HepG2 (cell line): ENCODE measurements at regions of chr4 and their contacts with region 1.

Region 1: DNA sequence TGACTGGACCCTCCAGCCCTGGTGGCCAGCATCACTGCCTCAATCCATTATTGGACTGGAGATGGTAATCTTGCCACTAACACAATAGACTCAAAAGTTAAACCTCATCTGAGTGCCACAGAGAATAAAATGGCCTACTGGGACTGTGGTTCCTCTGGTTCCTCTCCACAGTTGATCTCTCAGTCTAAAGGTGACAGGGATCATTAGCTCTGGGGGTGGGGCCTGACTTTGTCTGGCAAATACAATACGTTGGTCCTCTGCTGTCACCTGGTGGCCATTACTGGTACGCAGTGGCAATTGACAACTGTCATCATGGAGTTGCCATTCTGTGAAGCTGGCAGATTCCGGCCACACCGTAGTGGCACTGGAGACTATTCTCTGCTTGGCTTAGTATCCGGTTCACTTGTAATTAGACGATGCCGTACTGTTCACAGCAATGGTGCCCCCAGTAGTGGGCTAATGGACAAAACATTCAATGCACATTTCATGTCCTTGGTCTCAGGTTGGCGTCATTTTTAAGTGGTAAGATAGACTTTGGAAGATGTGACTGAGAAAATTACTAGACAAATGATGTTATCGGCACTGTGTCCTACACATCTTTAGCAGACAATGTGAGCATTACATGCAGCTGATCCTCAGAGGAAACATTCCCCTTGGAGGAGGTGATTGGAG is 6.7 kb downstream of the FGFBP2 start:
- DNase-seq: peak; percentile 72
- ATAC-seq: peak; percentile 98
- H3K4me3 ChIP-seq: no peak overlapping the region
- H3K27ac ChIP-seq: no peak overlapping the region
- H3K4me1 ChIP-seq: 0 out of 2 replicates have a peak, but pooled peaks cover 7% of the 10 kb centered on the region
- H3K27me3 ChIP-seq: peaks cover 0 to 18% of the 10 kb centered on the region in 2 experiments; a peak in 2 of 5 replicates
- CTCF ChIP-seq: peak; percentile 92
- EP300 ChIP-seq: no peak
- POLR2A ChIP-seq: no peak
- RAD21 ChIP-seq: peak; percentile 76

Region 2: DNA sequence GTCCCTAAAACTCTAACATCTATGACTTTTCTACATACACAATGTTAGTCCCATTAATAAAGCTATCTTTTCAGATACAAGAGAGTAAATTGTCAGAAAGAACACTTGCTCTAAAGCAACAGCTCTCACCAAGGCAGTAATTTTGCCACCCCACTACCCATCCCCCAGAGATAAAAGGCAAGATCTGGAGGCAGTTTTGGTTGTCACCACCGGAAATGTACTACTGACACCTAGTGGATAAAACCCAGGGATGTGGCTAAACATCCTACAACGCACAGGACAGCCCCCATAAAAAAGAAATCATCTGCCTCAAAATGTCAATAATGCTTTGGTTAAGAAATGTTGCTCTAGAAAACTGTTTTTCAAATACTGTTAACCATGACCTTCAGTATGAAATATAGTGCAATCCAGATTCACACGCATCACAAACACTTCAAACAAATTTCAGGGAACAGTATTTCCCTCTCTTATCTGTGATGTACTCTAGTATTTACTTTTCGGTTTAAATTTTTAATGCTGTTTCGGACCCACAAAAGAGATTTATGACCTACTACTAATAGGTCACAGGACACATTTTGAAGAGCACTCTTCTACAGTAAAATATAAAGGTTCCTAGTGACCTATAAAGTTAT is 306.3 kb before region 1 on chr4:
- CTCF ChIA-PET with region 1: no interaction called
- POLR2A ChIA-PET with region 1: no interaction called
- in situ Hi-C with region 1: no loop called
- intact Hi-C with region 1: loop called (anchors 2 kb)
- DNase-seq: peak; percentile 59
- ATAC-seq: peak; percentile 60
- H3K4me3 ChIP-seq: no peak overlapping the region
- H3K27ac ChIP-seq: no peak overlapping the region
- H3K4me1 ChIP-seq: peaks cover 38% of the 10 kb centered on the region
- H3K27me3 ChIP-seq: no peaks in the 10 kb centered on the region; a peak in 1 of 5 replicates
- CTCF ChIP-seq: peak; percentile 78
- EP300 ChIP-seq: no peak
- POLR2A ChIP-seq: no peak
- RAD21 ChIP-seq: peak; percentile 51

Region 3: DNA sequence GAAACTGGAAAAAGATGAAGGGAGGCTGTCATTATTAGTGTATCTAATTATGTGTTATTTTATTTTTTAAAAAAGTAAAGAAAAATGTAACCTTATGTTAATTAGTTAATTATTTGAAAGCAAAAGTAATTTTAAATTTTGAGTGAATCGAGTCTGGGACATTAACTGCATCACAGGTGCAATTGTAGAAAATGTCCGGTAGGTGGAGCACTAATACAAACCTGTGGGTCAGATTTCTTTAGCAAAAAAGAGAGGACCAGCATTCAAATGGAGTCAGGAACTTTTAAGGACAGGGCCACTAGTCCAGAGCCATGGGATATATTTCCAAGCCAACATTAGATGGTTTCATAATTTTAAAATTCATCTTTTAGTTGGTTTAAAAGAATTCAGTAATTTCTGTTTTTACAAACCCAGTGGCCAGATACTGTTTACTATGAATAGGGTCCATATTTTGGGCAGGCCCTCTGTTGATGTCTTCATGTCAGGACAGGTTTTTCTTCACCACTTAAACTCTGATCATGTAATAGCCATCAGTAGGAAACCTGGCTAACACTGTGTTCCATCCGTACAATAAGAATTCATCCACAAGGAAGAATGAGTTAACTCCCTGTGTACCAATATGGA is 226.3 kb before region 1 on chr4:
- CTCF ChIA-PET with region 1: no interaction called
- POLR2A ChIA-PET with region 1: no interaction called
- in situ Hi-C with region 1: no loop called
- intact Hi-C with region 1: loop called (anchors 1 kb)
- DNase-seq: peak; percentile 45
- ATAC-seq: peak; percentile 61
- H3K4me3 ChIP-seq: no peak overlapping the region
- H3K27ac ChIP-seq: no peak overlapping the region
- H3K4me1 ChIP-seq: no peaks in the 10 kb centered on the region
- H3K27me3 ChIP-seq: peaks cover 0 to 4% of the 10 kb centered on the region in 2 experiments; a peak in 1 of 5 replicates
- CTCF ChIP-seq: peak; percentile 70
- EP300 ChIP-seq: no peak
- POLR2A ChIP-seq: no peak
- RAD21 ChIP-seq: peak; percentile 24; the same call in 1 of the 2 replicates

Region 4: DNA sequence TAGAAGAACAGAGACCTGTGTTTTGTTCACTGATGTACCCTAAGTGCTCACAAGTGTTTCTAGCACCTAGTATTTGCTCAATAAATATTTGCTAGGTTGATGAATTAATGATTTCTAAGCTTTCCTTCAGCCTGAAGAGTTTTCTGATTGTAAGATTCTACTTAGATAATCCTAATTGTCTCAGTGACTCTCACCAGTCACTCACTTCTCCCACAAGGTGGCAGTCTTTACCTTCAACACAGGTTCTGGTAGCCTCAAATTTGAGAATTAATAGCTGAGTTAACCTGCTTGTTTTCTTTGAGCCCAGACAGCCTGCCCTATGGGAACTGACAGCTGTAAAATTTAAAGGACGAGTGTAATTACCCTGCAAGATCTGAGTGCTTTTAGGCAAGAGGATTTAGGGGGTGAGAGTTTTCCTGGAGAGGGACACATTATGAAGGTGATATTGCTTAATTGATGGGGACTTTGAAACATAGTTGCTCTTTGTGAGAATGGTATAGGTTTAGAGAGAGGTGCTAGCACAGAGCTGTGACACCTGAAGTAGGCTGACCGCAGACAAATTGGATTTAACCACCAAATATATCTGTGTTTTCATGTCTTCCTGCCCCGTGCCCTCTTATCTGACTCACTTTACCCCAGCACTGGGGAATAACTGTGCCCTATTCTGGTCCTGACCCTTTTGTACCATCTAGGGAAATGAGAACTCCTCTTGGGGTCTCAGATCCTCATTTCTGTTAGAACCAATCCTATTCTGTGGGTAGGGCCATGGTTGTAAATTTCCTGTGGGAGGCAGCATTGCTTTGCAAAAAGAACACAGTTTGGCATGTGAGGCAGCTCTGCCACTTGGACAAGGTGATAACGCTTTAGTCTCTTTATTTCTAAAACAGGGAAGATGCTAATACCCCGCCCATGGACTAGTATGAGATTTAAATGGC is 150.5 kb before region 1 on chr4:
- CTCF ChIA-PET with region 1: interaction called, 12 read pairs
- POLR2A ChIA-PET with region 1: no interaction called
- in situ Hi-C with region 1: loop called (anchors 5 kb)
- intact Hi-C with region 1: loop called (anchors 1 kb)
- DNase-seq: peak; percentile 53
- ATAC-seq: peak; percentile 81
- H3K4me3 ChIP-seq: no peak overlapping the region
- H3K27ac ChIP-seq: no peak overlapping the region
- H3K4me1 ChIP-seq: no peaks in the 10 kb centered on the region
- H3K27me3 ChIP-seq: peaks cover 2 to 8% of the 10 kb centered on the region in 2 experiments; a peak in 2 of 5 replicates
- CTCF ChIP-seq: peak; percentile 76
- EP300 ChIP-seq: no peak
- POLR2A ChIP-seq: no peak
- RAD21 ChIP-seq: 0 out of 2 replicates have a peak, but pooled peaks have one; percentile 24

Region 5: GRCh38 chr4:15882675-15883086 is 73.6 kb before region 1 on chr4:
- CTCF ChIA-PET with region 1: interaction called, 15 read pairs
- POLR2A ChIA-PET with region 1: no interaction called
- in situ Hi-C with region 1: loop called (anchors 5 kb)
- intact Hi-C with region 1: loop called (anchors 1 kb)
- DNase-seq: peak; percentile 64
- ATAC-seq: peak; percentile 96
- H3K4me3 ChIP-seq: no peak overlapping the region
- H3K27ac ChIP-seq: no peak overlapping the region
- H3K4me1 ChIP-seq: no peaks in the 10 kb centered on the region
- H3K27me3 ChIP-seq: no peaks in the 10 kb centered on the region; a peak in 1 of 5 replicates
- CTCF ChIP-seq: peak; percentile 89
- EP300 ChIP-seq: no peak
- POLR2A ChIP-seq: no peak
- RAD21 ChIP-seq: peak; percentile 54